ENCODE measurements at regions of chr18 and their contacts with region 1.

Region 1: DNA sequence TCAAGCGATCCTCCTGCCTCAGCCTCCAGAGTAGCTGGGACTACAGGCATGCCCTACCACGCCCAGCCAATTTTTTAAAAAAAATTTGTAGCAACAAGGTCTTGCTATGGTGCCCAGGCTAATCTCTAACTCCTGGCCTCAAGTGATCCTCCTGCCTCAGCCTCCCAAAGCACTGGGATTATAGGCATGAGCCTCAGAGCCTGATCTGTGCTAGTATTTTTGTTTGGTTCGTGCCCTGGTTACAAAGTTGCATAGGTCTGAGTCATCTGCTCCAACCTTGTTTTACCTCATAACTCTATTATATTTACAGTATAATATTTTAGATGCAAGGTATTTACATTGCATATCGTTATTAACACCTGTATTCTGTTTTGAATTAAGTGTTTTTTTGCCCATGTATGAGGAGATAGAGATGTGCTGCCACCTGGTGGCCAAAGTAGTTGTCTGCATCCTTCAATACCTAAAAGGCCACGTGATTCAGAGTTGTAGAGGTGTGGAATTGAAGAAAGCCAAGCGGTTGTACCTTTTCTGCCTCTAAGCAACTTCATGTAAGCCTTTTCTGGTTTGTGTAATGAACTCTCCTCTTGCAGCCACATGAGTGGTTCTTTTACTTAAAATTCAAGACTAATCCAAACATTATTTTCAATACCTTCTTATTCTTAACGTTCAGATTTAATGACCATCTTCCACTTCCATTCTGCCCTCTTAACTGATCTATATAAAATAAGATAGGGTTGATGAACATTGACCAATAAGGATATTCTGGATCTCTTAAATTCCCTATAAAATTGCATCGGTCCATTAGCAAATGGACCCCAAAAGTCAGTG is 19.9 kb upstream of the CABYR start:
- DNase-seq: peak; percentile 64
- CTCF ChIP-seq: peak; percentile 82

Region 2: DNA sequence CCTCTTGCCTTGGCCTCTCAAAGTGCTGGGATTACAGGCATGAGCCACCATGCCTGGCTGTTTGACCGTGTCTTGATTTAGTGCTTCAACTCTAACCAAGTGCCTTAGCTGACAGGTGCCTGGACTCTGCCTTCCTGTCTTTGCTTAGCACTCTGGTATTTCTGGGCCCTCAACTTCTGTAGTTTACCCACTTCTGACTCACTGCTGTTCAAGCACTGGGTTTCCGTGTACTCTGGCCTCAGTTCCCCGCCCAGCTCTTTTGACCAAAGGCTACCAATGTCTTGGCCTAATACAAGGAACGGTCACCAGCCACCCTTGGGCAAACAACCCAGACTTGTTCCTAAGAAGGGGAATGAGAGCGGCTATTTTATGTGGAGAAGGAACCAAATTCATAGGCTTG is 1019.3 kb before region 1 on chr18:
- in situ Hi-C with region 1: no loop called
- DNase-seq: no peak
- CTCF ChIP-seq: no peak

Region 3: DNA sequence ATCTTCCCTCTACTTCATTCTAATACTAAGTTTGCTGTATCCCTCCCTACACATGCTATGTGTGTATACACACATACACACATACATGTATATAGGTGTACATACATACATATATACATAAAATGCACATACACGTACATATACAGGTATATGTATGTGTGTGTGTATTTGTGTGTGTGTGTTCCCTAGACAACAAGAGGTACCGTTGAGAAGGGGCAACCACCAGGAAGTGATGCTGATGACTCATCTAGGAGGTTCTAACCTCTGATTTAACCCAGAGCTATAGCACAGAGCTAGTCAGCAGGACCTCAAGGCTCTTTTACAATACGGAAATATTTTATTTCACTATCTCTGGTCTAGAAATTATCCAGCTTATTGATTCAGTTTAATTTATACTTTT is 290.5 kb before region 1 on chr18:
- in situ Hi-C with region 1: loop called (anchors 10 kb)
- DNase-seq: peak; percentile 52
- CTCF ChIP-seq: no peak

Region 4: GRCh38 chr18:25058521-25058920 is 939.6 kb after region 1 on chr18:
- in situ Hi-C with region 1: no loop called
- DNase-seq: no peak
- CTCF ChIP-seq: no peak